A673 (cell line): ENCODE measurements at regions of chr17 and their contacts with region 1.

Region 1: DNA sequence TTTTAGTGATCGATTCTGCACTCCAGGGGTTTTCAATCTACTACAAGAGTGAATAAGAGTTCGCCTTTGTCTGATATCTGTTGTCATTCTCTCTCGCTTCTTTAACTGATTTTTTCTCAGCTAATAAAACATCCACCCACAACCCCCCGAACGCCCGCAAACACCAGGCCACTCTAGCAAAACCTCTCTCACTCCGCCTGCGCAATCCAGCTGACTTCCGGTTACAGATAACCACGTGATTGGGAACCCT is 338 bp upstream of the RPL19 start:
- DNase-seq: peak; percentile 89
- H3K4me3 ChIP-seq: peak overlapping the region; percentile 88
- H3K27ac ChIP-seq: peak overlapping the region; percentile 99
- H3K4me1 ChIP-seq: peaks cover 35% of the 10 kb centered on the region
- H3K27me3 ChIP-seq: no peaks in the 10 kb centered on the region
- CTCF ChIP-seq: no peak

Region 2: DNA sequence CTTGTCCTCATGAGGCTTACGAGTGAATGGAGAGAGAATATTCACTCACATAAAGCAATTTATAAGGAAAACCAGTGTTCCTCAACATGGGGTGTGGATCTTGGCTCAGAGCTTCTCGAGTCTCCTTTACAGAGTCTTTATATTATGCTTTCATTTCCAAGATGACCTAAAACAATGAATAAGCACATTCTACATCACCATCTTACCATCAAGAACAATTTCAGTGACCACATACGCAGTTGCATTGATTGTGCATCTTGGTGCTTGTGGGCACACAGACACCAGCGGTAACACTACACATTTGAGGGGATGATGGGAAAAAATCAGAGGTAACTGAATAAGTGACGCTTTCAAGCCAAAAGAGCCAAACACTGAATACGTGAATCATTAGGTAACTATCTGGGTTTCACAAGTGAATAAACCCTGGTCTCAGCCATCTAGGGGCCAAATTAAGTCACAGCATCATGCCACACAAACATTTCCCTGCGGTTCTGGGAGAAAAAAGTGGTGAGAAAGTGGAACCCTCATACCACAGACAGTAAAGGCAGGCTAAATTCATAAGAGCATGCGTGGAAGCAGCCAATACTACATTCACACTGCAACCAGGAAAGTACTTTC is 384.1 kb before region 1 on chr17:
- CTCF ChIA-PET with region 1: no interaction called
- POLR2A ChIA-PET with region 1: interaction called, 20 read pairs
- intact Hi-C with region 1: no loop called
- DNase-seq: no peak
- H3K4me3 ChIP-seq: no peak overlapping the region
- H3K27ac ChIP-seq: no peak overlapping the region
- H3K4me1 ChIP-seq: no peaks in the 10 kb centered on the region
- H3K27me3 ChIP-seq: no peaks in the 10 kb centered on the region
- CTCF ChIP-seq: no peak

Region 3: DNA sequence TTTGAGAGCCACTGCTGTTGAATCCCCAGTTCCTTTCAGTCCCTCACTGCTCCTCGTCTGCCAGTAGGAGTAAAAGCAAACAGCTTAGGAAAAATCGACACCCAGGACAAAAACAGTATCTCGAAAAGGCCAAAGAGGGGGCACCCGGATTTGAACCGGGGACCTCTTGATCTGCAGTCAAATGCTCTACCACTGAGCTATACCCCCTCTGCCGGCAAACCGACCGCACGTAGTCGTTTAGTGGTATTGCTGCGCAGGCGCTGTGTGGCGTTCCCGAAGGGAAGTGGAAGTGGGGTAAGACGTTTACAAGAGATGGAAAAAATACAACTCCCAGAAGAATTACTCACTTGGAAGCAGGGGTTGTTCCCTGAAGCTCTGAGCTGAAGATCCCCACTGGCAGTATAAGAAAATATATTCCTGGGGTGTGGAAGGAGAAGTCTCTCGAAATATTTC is 46.1 kb before region 1 on chr17:
- CTCF ChIA-PET with region 1: interaction called, 5 read pairs
- POLR2A ChIA-PET with region 1: interaction called, 18 read pairs
- intact Hi-C with region 1: no loop called
- DNase-seq: peak; percentile 85
- H3K4me3 ChIP-seq: peak overlapping the region; percentile 87
- H3K27ac ChIP-seq: peak overlapping the region; percentile 74
- H3K4me1 ChIP-seq: no peaks in the 10 kb centered on the region
- H3K27me3 ChIP-seq: no peaks in the 10 kb centered on the region
- CTCF ChIP-seq: no peak

Region 4: GRCh38 chr17:39164675-39165143 is 35.0 kb before region 1 on chr17:
- CTCF ChIA-PET with region 1: interaction called, 12 read pairs
- POLR2A ChIA-PET with region 1: interaction called, 10 read pairs
- intact Hi-C with region 1: no loop called
- DNase-seq: peak; percentile 82
- H3K4me3 ChIP-seq: peak overlapping the region; percentile 47
- H3K27ac ChIP-seq: no peak overlapping the region
- H3K4me1 ChIP-seq: no peaks in the 10 kb centered on the region
- H3K27me3 ChIP-seq: no peaks in the 10 kb centered on the region
- CTCF ChIP-seq: peak; percentile 71

Region 5: GRCh38 chr17:39235555-39236449 is 36.1 kb after region 1 on chr17:
- CTCF ChIA-PET with region 1: interaction called, 3 read pairs
- POLR2A ChIA-PET with region 1: no interaction called
- intact Hi-C with region 1: loop called (anchors 5 kb)
- DNase-seq: peak; percentile 66
- H3K4me3 ChIP-seq: no peak overlapping the region
- H3K27ac ChIP-seq: no peak overlapping the region
- H3K4me1 ChIP-seq: peaks cover 12% of the 10 kb centered on the region
- H3K27me3 ChIP-seq: no peaks in the 10 kb centered on the region
- CTCF ChIP-seq: peak; percentile 74